K562 (cell line): ENCODE measurements at regions of chr1 and their contacts with region 1.

Region 1: GRCh38 chr1:244272471-244273261 is 179.0 kb downstream of the ADSS2 start:
- DNase-seq: peak; percentile 83 to 90 (median 89)
- ATAC-seq: peak; percentile 92
- H3K4me3 ChIP-seq: no peak overlapping the region
- H3K27ac ChIP-seq: no peak overlapping the region
- H3K4me1 ChIP-seq: peaks cover 6 to 12% of the 10 kb centered on the region in 2 experiments; a peak in 4 of 5 replicates
- H3K27me3 ChIP-seq: peaks cover 14 to 28% of the 10 kb centered on the region in 2 experiments; a peak in 3 of 5 replicates
- CTCF ChIP-seq: peak; percentile 98 to 100 (median 99)
- EP300 ChIP-seq: no peak
- POLR2A ChIP-seq: no peak
- RAD21 ChIP-seq: peak; percentile 99 to 100

Region 2: GRCh38 chr1:243325305-243325890 is 947.3 kb before region 1 on chr1:
- CTCF ChIA-PET with region 1: interaction called, 3 read pairs
- POLR2A ChIA-PET with region 1: no interaction called
- in situ Hi-C with region 1: loop called (anchors 10 kb)
- intact Hi-C with region 1: loop called (anchors 5 kb)
- DNase-seq: peak; percentile 42 to 75 (median 52)
- ATAC-seq: peak; percentile 73
- H3K4me3 ChIP-seq: no peak overlapping the region
- H3K27ac ChIP-seq: no peak overlapping the region
- H3K4me1 ChIP-seq: no peaks in the 10 kb centered on the region
- H3K27me3 ChIP-seq: no peaks in the 10 kb centered on the region
- CTCF ChIP-seq: peak; percentile 53 to 89 (median 62); a peak in 4 of 6 replicates
- EP300 ChIP-seq: no peak
- POLR2A ChIP-seq: no peak
- RAD21 ChIP-seq: peak; percentile 96

Region 3: DNA sequence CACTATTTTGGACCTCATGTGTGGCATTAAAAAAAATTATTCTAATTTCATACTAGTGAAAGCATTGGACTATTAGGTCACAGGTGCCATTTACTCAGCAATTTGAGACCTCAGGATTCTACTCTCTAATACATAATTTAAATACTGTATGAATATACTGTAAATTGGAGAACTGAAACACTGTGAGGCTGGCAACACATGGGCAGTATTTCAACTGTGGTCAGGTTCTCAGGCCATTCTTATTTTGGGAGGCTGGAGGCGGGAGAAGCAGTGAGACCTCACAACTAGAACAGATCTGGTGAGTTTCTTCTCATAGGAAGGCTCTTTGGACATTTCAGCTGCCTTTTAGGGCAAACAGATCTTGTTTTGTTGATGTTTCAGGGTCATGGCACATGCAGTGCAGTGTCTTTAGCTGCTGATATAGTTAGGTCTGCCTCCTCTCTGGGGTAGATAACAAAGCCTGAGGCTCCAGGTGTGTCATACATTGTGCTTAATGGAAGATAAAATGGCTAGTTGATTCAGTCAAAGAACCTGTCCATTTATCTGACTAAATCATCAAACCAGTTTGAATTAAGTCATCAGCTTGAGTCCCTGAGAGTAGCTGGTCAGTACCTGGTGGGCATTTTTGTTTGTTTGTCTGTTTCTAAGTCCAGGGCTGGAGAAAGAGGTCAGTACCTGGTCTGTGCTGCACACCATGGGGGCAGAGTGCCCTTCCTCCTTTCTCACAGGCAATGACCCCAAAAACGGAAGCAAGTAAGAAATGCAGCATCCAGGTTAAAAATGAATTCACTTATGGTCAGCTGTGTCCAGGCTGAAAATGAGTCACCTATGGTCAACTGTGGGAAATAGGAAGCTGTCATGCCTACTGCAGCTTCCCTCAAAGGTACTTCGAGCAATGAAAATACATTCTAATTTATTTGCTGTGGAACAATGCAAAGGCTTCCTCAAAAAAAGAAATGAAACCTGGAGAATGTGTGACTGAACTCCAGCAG is 800.6 kb before region 1 on chr1:
- CTCF ChIA-PET with region 1: interaction called, 7 read pairs
- POLR2A ChIA-PET with region 1: no interaction called
- in situ Hi-C with region 1: loop called (anchors 25 kb)
- intact Hi-C with region 1: loop called (anchors 5 kb)
- DNase-seq: no peak
- ATAC-seq: peak; percentile 15; the same call in 1 of the 3 replicates
- H3K4me3 ChIP-seq: no peak overlapping the region
- H3K27ac ChIP-seq: no peak overlapping the region
- H3K4me1 ChIP-seq: peaks cover 6 to 15% of the 10 kb centered on the region in 2 experiments; a peak in 2 of 5 replicates
- H3K27me3 ChIP-seq: no peaks in the 10 kb centered on the region
- CTCF ChIP-seq: no peak
- EP300 ChIP-seq: no peak
- POLR2A ChIP-seq: no peak
- RAD21 ChIP-seq: no peak

Region 4: GRCh38 chr1:243748706-243749283 is 523.9 kb before region 1 on chr1:
- CTCF ChIA-PET with region 1: no interaction called
- POLR2A ChIA-PET with region 1: no interaction called
- in situ Hi-C with region 1: no loop called
- intact Hi-C with region 1: loop called (anchors 2 kb)
- DNase-seq: peak; percentile 54 to 70 (median 61)
- ATAC-seq: peak; percentile 97
- H3K4me3 ChIP-seq: no peak overlapping the region
- H3K27ac ChIP-seq: no peak overlapping the region
- H3K4me1 ChIP-seq: no peaks in the 10 kb centered on the region
- H3K27me3 ChIP-seq: no peaks in the 10 kb centered on the region
- CTCF ChIP-seq: peak; percentile 63 to 77 (median 70)
- EP300 ChIP-seq: no peak
- POLR2A ChIP-seq: no peak
- RAD21 ChIP-seq: peak; percentile 79 to 85

Region 5: GRCh38 chr1:244012202-244012601 is 260.5 kb before region 1 on chr1:
- CTCF ChIA-PET with region 1: interaction called, 27 read pairs
- POLR2A ChIA-PET with region 1: no interaction called
- in situ Hi-C with region 1: no loop called
- intact Hi-C with region 1: loop called (anchors 1 kb)
- DNase-seq: no peak
- ATAC-seq: no peak
- H3K4me3 ChIP-seq: no peak overlapping the region
- H3K27ac ChIP-seq: no peak overlapping the region
- H3K4me1 ChIP-seq: no peaks in the 10 kb centered on the region
- H3K27me3 ChIP-seq: peaks cover 14 to 27% of the 10 kb centered on the region in 2 experiments; a peak in 3 of 5 replicates
- CTCF ChIP-seq: no peak
- EP300 ChIP-seq: no peak
- POLR2A ChIP-seq: no peak
- RAD21 ChIP-seq: no peak

Region 6: GRCh38 chr1:244302889-244303613 is 30.4 kb after region 1 on chr1:
- CTCF ChIA-PET with region 1: interaction called, 6 read pairs
- POLR2A ChIA-PET with region 1: no interaction called
- in situ Hi-C with region 1: no loop called
- intact Hi-C with region 1: loop called (anchors 1 kb)
- DNase-seq: peak; percentile 85 to 97 (median 87)
- ATAC-seq: peak; percentile 81
- H3K4me3 ChIP-seq: no peak overlapping the region
- H3K27ac ChIP-seq: peak overlapping the region; percentile 90
- H3K4me1 ChIP-seq: peaks cover 29 to 52% of the 10 kb centered on the region in 2 experiments
- H3K27me3 ChIP-seq: no peaks in the 10 kb centered on the region
- CTCF ChIP-seq: no peak; a peak in 1 of 6 replicates
- EP300 ChIP-seq: peak; percentile 98
- POLR2A ChIP-seq: no peak; the same call in 1 of the 2 replicates
- RAD21 ChIP-seq: peak in 1 of 2 experiments; percentile 36; a peak in 3 of 4 replicates

Region 7: DNA sequence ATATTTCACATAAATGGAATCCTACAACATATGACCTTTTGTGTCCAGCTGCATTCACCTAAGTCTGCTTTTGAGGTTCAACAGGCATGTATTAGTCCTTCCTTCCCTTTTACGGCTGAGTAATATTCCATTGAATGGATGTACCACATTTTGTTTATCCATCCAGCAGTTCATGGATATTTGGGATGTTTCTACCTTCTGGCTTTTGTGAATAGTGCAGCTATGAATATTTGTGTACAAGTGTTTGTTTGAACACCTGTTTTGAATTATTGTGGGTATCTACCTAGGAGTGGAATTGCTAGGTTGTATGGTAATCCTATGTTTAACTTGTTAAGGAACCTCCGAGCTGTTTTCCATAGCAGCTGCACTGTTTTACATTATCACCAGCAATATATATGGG is 318.0 kb after region 1 on chr1:
- CTCF ChIA-PET with region 1: no interaction called
- POLR2A ChIA-PET with region 1: no interaction called
- in situ Hi-C with region 1: no loop called
- intact Hi-C with region 1: no loop called
- DNase-seq: no peak
- ATAC-seq: no peak
- H3K4me3 ChIP-seq: no peak overlapping the region
- H3K27ac ChIP-seq: no peak overlapping the region
- H3K4me1 ChIP-seq: no peaks in the 10 kb centered on the region; a peak in 2 of 5 replicates
- H3K27me3 ChIP-seq: peaks cover 4% of the 10 kb centered on the region in 2 experiments; a peak in 1 of 5 replicates
- CTCF ChIP-seq: no peak
- EP300 ChIP-seq: no peak
- POLR2A ChIP-seq: no peak
- RAD21 ChIP-seq: no peak